Aorta (tissue), 5 donors: ENCODE measurements at regions of chr18 and their contacts with region 1.

Region 1: DNA sequence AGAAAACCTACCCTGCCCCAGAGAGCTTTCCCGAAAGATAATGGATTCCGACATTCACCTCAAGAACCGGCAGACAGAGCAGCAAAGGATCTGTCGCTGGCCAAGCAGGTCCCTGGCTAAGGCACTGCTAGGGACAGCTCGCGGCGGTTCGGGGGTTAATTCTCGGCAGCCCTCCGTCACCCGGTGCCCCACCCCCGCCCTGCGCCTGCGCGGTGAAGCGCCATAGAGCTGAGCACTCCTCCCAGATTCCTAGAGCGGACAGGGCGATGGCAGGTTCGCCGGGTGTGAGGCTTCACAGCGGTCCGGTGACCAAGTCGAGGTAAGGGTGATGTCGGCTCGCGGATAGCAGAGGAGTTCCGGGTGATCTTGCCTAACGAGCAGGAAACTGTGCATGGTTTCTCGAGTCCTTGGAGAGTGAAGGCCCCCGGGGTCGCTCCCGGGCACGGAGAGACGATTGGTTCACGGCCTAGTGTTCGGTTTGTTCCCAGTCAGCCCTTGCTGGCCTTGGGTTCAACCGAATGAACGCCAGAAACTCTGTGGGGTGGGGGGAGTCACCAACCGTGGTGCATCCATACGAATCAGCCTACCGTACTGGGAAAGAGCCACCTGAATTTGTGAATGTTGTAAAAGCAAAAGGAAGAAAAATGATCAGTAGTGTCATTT is at the start of gene ZSCAN30:
- DNase-seq: peak; percentile 95 to 98
- ATAC-seq: peak; percentile 99
- H3K4me3 ChIP-seq: peak within 1 kb of the TSS; percentile 64 to 84
- H3K27ac ChIP-seq: peak within 1 kb of the TSS in 1 of 2 donors; percentile 39
- H3K4me1 ChIP-seq: no peaks in the 10 kb centered on the region
- H3K27me3 ChIP-seq: no peaks in the 10 kb centered on the region
- total RNA-seq, gene ZSCAN30: 27.1 to 31.8 TPM

Region 2: DNA sequence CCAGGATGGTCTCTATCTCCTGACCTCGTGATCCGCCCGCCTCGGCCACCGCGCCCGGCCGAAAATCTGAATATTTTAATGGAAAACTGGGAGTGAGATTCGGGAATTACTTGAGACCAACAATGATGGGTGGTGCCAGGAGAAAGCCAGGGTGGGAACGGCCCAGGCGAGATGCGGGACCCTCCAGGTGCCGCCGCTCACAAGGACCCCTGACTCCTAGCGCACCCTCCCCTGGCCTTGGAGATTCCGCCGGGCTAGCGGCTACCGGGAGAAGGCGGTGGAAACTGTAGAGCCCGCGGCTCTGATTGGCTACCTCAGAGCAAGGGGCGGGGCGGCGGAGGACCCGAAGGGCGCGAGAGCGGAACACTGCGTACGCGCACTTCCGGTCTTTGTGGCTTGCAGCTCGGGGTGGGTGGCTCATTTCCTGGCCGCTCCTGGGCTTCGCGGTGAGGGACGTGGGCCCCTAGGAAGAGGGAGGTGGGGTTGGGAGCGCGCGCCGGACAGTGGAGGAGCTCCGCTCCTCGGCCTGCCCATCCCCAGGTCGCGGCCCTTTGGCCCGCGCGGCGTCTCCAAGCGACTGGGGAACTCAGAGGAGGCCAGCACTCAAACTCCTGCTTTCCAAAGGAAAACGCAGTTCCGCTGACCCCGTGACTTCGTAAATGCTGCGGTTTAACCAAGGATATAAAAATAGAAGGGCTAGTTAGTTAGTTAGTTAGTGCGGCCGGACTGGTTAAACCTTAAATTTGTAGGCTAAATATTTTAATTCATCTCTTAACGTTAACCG is 49.3 kb before region 1 on chr18 and contains the start of gene ZNF397:
- intact Hi-C with region 1: loop called in 1 of 2 experiments (anchors 5 kb)
- DNase-seq: peak; percentile 99 to 100
- ATAC-seq: peak; percentile 100
- H3K4me3 ChIP-seq: peak within 1 kb of the TSS; percentile 71 to 83
- H3K27ac ChIP-seq: peak within 1 kb of the TSS; percentile 96 to 99
- H3K4me1 ChIP-seq: no peaks in the 10 kb centered on the region
- H3K27me3 ChIP-seq: no peaks in the 10 kb centered on the region
- total RNA-seq, gene ZNF397: 32.8 to 40.4 TPM

Region 3: GRCh38 chr18:35267161-35267651 is 23.0 kb before region 1 on chr18:
- intact Hi-C with region 1: loop called in 1 of 2 experiments (anchors 2 kb)
- DNase-seq: peak; percentile 84 to 94
- ATAC-seq: peak; percentile 97
- H3K4me3 ChIP-seq: peak overlapping the region; percentile 15 to 52
- H3K27ac ChIP-seq: peak overlapping the region in 1 of 2 donors; percentile 32
- H3K4me1 ChIP-seq: no peaks in the 10 kb centered on the region
- H3K27me3 ChIP-seq: no peaks in the 10 kb centered on the region

Region 4: DNA sequence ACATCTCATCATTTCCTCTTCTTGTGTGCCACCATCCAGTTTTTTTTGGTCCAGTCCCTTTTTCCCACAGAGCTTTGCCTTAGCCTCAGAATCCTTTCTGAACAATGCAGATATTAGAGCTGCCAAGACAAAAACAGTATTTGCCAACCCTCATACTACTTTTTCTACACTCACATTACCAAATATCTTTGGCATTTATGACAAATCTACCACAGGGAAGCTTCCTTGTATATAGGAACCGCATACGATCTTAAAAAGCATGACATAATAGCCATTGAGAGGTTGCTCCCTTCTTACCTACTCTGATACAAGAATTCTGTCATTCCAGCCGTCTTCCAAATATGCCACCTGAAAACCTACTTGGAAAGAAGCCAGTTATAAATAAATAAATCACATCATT is 44.6 kb after region 1 on chr18:
- intact Hi-C with region 1: loop called (anchors 2 to 5 kb)
- DNase-seq: no peak
- ATAC-seq: no peak
- H3K4me3 ChIP-seq: no peak overlapping the region
- H3K27ac ChIP-seq: no peak overlapping the region
- H3K4me1 ChIP-seq: peaks cover 0 to 2% of the 10 kb centered on the region in 2 donors
- H3K27me3 ChIP-seq: no peaks in the 10 kb centered on the region

Region 5: DNA sequence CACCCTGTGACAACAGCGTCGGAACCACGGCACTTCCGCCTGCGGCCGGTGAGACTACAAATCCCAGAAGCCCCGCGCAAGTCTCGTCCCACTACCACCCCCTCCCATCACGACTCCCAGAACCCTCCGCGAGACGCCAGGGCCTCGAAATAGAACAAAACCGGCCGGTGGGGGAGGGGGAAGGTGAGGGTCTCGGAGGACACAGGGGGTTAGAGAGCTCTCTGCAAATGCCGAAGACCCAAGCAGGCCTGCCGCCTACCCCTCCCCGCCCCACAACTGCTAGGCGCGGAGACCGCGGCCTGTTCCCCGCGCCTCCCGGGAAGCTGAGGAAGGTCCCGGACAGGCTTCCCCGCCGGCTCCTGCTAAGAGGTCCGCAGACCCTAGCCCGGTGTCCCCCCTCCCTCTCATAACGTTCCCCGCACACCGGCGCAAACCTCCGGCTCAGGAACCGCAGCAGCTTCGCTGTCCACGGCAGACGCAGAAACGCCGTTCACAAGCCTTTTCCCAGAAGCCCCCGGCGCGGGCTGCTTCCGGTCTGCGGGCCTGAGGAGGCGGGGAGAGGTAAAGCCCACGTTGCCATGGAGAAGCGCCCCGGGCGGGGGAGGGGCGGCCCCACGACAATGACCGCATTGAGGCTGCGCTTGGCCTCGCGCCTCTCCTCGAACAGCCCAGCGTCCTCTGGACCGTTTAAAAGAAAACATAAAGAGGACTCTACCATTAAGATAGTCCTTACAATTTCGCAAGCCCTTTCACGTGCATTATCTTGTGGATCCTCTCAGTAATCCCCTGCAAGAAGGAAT is 53.9 kb after region 1 on chr18 and contains the start of gene ZNF24:
- intact Hi-C with region 1: loop called in 1 of 2 experiments (anchors 5 kb)
- DNase-seq: peak; percentile 98 to 99
- ATAC-seq: peak; percentile 99
- H3K4me3 ChIP-seq: peak within 1 kb of the TSS; percentile 71 to 90
- H3K27ac ChIP-seq: peak within 1 kb of the TSS; percentile 80 to 95
- H3K4me1 ChIP-seq: peaks cover 0 to 3% of the 10 kb centered on the region in 2 donors
- H3K27me3 ChIP-seq: no peaks in the 10 kb centered on the region
- total RNA-seq, gene ZNF24: 44.3 to 52.5 TPM